ENCODE measurements at regions of chr6 and their contacts with region 1.

Region 1: GRCh38 chr6:116268589-116269293 is 11.0 kb downstream of the TSPYL1 start:
- DNase-seq: no peak
- H3K4me3 ChIP-seq: no peak overlapping the region
- H3K27ac ChIP-seq: no peak overlapping the region
- H3K4me1 ChIP-seq: no peaks in the 10 kb centered on the region
- H3K27me3 ChIP-seq: no peaks in the 10 kb centered on the region
- CTCF ChIP-seq: peak; percentile 69

Region 2: GRCh38 chr6:116159782-116160524 is 108.8 kb before region 1 on chr6:
- intact Hi-C with region 1: no loop called
- DNase-seq: no peak
- H3K4me3 ChIP-seq: no peak overlapping the region
- H3K27ac ChIP-seq: no peak overlapping the region
- H3K4me1 ChIP-seq: no peaks in the 10 kb centered on the region
- H3K27me3 ChIP-seq: no peaks in the 10 kb centered on the region
- CTCF ChIP-seq: no peak

Region 3: DNA sequence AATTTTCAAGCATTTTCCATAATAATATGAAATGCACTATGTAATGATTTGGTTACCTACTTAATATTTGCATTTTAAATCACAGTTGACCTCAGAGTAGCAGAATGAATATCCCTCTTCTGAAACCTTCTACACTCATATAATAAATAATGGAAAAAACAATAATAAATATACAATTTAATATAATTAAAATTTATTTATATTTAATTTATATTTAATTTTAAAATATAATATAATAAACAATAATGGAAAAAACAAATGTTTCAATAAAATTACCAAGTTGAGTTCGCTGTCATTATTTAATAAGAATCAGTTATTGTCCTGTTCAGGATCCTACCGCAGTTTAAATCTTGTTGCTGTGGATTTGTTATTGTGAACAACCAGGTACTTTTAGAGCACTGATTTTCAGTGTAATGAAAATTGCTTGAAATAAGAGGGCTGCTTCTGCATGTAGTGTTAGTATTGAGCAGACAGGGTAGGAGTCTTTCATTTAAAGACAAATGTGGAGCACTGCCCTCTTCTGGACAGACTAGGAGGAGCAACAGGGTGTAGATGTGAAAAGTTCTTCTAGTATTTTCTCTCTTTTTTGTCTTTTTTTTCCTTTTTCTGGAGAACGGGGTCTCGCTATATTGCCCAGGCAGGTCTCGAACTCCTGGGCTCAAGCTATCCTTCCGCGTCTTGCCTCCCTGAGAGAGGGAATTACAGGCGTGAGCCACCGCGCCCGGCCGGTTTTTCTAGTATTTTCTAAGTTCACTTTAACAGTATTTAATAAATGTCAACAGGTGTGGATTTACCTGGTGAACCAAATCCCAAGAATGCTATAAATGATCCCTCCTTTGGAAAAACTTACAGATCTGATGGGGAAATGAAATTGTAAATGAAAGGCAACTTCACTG is 263.2 kb after region 1 on chr6:
- intact Hi-C with region 1: loop called (anchors 5 kb)
- DNase-seq: peak; percentile 64
- H3K4me3 ChIP-seq: no peak overlapping the region
- H3K27ac ChIP-seq: no peak overlapping the region
- H3K4me1 ChIP-seq: no peaks in the 10 kb centered on the region
- H3K27me3 ChIP-seq: no peaks in the 10 kb centered on the region
- CTCF ChIP-seq: peak; percentile 72

Region 4: GRCh38 chr6:116801971-116802370 is 533.2 kb after region 1 on chr6:
- intact Hi-C with region 1: no loop called
- DNase-seq: no peak
- H3K4me3 ChIP-seq: no peak overlapping the region
- H3K27ac ChIP-seq: no peak overlapping the region
- H3K4me1 ChIP-seq: no peaks in the 10 kb centered on the region
- H3K27me3 ChIP-seq: no peaks in the 10 kb centered on the region
- CTCF ChIP-seq: no peak